ENCODE measurements at regions of chr19 and their contacts with region 1.

Region 1: GRCh38 chr19:39125554-39126311 is at the start of gene PAK4:
- DNase-seq: peak; percentile 98 to 99
- ATAC-seq: peak; percentile 100
- H3K4me3 ChIP-seq: peak within 1 kb of the TSS; percentile 95
- H3K27ac ChIP-seq: peak within 1 kb of the TSS; percentile 71
- H3K4me1 ChIP-seq: peaks cover 8% of the 10 kb centered on the region
- H3K27me3 ChIP-seq: peaks cover 0 to 5% (median 0%) of the 10 kb centered on the region in 3 donors
- CTCF ChIP-seq: no peak
- total RNA-seq, gene PAK4: 10.6 to 17.3 (median 11.6) TPM

Region 2: DNA sequence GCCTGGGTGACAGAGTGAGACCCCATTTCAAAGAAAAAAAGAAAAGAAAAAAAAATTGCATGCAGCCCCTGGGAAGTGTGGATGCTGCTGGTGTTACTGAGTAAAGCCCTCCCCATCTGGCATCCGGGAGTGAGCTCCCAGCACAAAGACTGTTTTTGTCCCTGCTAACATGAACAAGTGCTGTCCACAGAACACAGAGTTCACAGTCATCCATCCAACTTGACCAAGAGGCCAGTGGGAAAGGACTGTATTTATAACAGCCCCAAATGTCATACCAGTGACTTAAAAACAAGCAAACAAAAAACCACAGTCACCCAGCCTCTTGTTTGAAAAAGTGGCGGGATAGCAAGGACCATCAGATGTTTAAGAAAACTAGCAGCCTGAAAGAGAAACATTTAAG is 161.0 kb before region 1 on chr19:
- intact Hi-C with region 1: loop called in 1 of 2 experiments (anchors 10 kb)
- DNase-seq: no peak
- ATAC-seq: no peak
- H3K4me3 ChIP-seq: no peak overlapping the region
- H3K27ac ChIP-seq: no peak overlapping the region
- H3K4me1 ChIP-seq: peaks cover 7% of the 10 kb centered on the region
- H3K27me3 ChIP-seq: no peaks in the 10 kb centered on the region
- CTCF ChIP-seq: no peak

Region 3: DNA sequence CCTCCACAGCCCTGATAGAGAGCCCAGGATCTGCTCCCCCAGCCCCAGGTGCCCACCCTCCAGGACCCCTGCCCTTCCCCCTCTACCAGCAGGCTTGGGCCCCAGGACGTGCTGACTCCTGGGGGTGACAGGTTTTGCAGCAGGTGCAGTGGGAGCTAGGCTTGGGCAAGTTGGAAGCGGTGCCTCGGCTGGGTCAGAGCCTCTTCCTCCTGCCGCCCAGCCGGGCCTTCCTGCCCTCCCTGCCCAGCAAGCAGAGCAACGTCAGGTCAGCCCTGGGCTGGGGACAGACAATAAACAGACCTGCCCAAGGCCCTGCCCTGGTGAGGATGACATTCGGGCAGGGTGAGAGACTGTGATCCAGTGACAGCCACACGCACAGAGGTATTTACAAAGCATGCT is 61.8 kb after region 1 on chr19:
- intact Hi-C with region 1: loop called in 1 of 2 experiments (anchors 5 kb)
- DNase-seq: no peak
- ATAC-seq: no peak
- H3K4me3 ChIP-seq: no peak overlapping the region
- H3K27ac ChIP-seq: no peak overlapping the region
- H3K4me1 ChIP-seq: no peaks in the 10 kb centered on the region
- H3K27me3 ChIP-seq: peaks cover 0 to 17% (median 1%) of the 10 kb centered on the region in 3 donors
- CTCF ChIP-seq: no peak

Region 4: DNA sequence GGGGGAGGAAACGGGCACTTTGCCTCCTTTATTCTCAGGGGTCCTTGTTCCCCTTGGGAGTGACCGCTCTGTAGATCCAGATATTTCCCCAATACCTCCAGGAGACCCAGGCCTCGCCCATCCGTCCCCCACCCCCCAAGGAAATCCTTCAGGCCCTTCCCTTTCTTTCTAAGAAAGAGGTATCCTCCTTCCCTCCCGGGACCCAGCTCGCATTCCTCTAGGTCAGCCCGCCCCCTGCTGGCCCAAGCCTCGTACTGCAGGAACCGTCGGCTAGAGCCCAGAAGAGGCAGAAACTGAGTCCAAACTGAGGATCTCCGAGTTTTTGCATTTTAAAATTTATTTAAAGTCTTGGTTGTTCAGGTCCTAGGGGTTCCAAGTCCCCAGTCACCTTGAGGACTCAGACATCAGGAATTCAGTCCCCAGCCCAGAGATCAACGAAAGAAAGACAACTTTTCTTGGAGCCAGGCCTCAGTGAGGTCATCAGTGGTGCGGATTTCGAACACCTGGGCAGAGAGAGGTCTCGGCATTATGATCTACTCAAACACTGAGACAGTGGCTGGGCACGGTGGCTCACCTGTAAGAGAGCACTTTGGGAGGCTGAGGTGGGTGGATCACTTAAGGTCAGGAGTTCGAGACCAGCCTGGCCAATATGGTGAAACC is 202.4 kb after region 1 on chr19:
- intact Hi-C with region 1: loop called (anchors 1 to 5 kb)
- DNase-seq: peak; percentile 84 to 89
- ATAC-seq: peak; percentile 73 to 85 (median 78)
- H3K4me3 ChIP-seq: no peak overlapping the region
- H3K27ac ChIP-seq: no peak overlapping the region
- H3K4me1 ChIP-seq: no peaks in the 10 kb centered on the region
- H3K27me3 ChIP-seq: no peaks in the 10 kb centered on the region
- CTCF ChIP-seq: peak; percentile 95